Ascending aorta (tissue), 2 donors: ENCODE measurements at regions of chr10 and their contacts with region 1.

Region 1: DNA sequence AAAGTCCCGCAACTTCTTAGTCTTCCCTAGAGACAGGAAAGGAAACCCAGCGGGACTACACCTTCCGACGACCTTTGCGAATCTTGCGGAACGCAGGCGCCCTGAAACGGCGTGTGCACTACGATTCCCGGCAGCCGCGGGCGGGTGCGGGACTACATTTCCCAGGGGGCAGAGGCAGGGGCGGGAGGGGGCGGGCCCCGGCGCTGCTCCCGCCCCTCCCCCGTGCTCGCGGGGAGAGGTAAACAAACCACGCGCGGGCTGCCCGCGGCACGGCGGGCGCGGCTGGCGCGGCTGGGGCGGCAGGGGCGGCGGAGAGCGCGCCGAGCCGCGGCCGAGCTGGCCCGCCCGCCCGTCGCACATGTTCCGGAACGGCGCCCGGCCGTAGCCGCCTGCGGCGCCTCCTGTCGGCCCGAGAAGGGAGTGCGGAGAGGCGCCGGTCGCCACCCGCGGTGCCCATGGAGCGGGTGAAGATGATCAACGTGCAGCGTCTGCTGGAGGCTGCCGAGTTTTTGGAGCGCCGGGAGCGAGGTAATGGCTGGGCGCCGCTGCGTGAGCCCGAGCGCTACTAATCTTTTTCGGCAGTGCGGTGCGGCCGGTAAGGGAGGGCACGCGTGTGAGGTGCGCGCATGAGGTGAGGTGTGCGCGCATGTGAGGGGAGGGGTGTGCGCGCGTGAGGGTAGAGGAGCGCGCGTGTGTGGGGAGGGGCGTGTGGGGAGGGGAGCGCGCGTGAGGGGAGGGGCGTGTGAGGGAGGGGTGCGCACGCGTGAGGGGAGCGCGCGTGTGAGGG is 18.5 kb downstream of the MXI1 start:
- DNase-seq: peak; percentile 63 to 95
- H3K4me3 ChIP-seq: peak overlapping the region; percentile 84 to 94
- H3K27ac ChIP-seq: peak overlapping the region; percentile 87 to 98
- H3K4me1 ChIP-seq: peaks cover 0 to 22% of the 10 kb centered on the region in 2 donors
- H3K27me3 ChIP-seq: no peaks in the 10 kb centered on the region
- CTCF ChIP-seq: peak; percentile 76 to 93 (median 77)

Region 2: DNA sequence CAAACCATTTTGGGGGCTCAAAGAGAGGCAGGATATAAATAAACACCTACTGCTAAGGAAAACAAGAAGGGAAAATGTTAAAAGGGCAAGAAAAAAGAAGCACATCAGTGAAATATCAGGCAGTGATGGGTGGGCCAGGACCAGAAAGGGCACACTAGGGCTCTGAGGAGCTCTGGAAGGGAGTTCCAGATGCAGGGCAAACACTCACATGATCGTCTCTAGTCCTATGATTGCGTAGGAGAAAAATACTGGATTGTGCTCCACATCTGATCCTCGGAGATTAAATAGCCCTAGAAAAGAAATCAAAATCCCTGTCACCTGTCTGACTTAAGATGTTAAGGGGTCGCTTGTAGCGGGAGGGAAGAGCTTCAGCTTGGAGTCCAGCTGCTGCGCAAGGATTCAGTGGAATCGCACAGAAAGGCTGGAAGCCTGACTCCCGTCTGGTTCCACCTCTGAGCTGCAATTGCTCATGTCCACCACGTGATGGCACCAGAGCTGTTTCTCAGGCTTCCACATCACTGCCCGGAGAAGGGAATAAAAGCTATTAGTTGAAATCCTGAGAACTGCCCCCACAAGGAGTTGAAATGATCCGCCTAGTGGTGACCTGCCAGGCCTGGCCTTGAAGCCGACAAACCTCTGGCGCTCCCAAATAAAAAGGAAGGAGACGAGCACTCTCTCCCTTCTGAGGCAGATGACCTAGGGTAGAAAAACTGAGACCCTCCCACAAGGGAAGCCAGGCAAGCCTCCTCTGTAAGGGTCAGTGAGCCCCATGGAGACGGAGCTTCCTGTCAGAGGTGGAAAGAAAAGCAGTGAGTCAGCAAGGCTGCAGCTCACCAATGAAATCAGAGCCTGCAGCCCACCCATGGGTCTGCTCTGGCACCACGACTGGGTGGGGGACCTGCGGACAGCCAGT is 341.8 kb before region 1 on chr10:
- intact Hi-C with region 1: loop called (anchors 5 kb)
- DNase-seq: peak in 1 of 2 donors; percentile 84
- H3K4me3 ChIP-seq: peak overlapping the region in 1 of 2 donors; percentile 45
- H3K27ac ChIP-seq: peak overlapping the region; percentile 60 to 68
- H3K4me1 ChIP-seq: peaks cover 5 to 24% of the 10 kb centered on the region in 2 donors
- H3K27me3 ChIP-seq: no peaks in the 10 kb centered on the region
- CTCF ChIP-seq: peak; percentile 95 to 97 (median 95)

Region 3: GRCh38 chr10:110137142-110137545 is 88.8 kb before region 1 on chr10:
- intact Hi-C with region 1: loop called (anchors 2 kb)
- DNase-seq: no peak
- H3K4me3 ChIP-seq: no peak overlapping the region
- H3K27ac ChIP-seq: peak overlapping the region; percentile 38 to 53
- H3K4me1 ChIP-seq: peaks cover 0 to 15% of the 10 kb centered on the region in 2 donors
- H3K27me3 ChIP-seq: no peaks in the 10 kb centered on the region
- CTCF ChIP-seq: peak; percentile 72 to 86 (median 78)

Region 4: DNA sequence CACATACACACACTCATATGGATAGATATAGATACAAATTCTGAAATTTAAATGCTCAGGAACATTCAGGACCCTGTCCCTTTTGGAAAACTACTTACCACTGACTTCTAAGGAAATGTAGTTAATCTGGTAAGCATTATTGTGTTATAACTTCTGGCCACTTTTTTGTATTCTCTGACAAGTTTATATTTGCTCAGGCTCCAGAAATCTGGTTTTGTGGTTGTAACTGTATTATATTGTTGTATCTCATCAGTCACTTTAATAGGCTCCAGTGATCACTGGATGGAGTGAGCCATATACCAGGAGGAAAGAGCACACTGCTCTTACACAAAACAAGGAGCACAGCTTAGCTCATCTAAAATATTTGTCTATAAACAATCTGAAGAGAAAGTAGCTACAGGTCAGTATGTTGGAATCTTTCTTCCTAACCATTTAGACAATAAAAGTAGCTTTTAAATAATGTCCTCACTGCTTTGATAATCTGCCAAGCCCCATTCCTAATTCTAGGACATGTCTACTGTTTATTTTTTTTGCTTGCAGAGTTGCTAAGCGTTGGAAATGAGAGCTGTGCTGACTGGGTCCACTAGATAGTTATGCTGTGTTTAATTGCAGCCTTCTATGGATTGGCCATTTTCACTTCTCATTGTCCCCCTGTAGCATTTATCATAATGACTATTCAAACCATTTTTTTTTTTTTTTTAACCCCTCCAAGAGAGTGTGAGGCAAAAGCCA is 35.0 kb after region 1 on chr10:
- intact Hi-C with region 1: loop called (anchors 5 kb)
- DNase-seq: no peak
- H3K4me3 ChIP-seq: no peak overlapping the region
- H3K27ac ChIP-seq: peak overlapping the region; percentile 84 to 90
- H3K4me1 ChIP-seq: peaks cover 8 to 61% of the 10 kb centered on the region in 2 donors
- H3K27me3 ChIP-seq: no peaks in the 10 kb centered on the region
- CTCF ChIP-seq: no peak

Region 5: DNA sequence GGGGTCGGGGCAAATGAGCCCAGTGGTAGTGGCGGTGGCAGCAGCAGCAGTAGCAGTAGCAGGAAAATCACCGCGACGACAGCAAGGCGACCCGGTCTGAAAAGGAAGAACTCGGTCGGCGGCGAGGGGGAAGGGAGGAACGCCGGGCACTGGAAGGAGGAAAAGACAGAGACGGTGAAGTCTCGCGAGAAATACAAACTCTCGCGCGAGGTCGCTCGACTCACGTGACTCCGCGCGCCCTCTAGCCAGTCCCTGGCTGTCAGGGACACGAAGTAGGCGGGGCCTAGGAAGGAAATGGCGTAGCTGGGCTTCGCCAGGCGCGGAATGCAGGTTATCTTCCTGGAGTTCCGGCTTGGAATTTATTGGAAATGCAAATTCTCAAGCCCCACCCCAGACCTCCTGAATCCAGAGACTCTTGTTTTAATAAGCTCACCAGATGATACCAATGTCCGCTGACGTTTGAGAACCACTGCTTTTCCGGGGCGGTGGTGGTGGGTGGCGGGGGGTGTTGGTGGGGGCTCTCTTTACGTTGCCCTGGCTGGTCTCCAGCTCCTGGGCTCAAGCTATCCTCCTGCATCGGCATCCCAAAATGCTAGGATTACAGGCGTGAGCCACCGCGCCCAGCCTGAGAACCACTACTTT is 79.0 kb after region 1 on chr10 and contains the start of gene SMNDC1:
- intact Hi-C with region 1: loop called (anchors 2 kb)
- DNase-seq: peak; percentile 90 to 99
- H3K4me3 ChIP-seq: peak within 1 kb of the TSS; percentile 75 to 99
- H3K27ac ChIP-seq: peak within 1 kb of the TSS; percentile 95 to 96
- H3K4me1 ChIP-seq: peaks cover 5 to 36% of the 10 kb centered on the region in 2 donors
- H3K27me3 ChIP-seq: no peaks in the 10 kb centered on the region
- CTCF ChIP-seq: no peak
- total RNA-seq, gene SMNDC1: 6.9 TPM

Region 6: GRCh38 chr10:110567201-110568054 is 341.5 kb after region 1 on chr10 and contains the start of gene SMC3:
- intact Hi-C with region 1: loop called (anchors 1 kb)
- DNase-seq: peak; percentile 40 to 94
- H3K4me3 ChIP-seq: peak within 1 kb of the TSS; percentile 81 to 97
- H3K27ac ChIP-seq: peak within 1 kb of the TSS; percentile 84 to 85
- H3K4me1 ChIP-seq: peaks cover 0 to 10% of the 10 kb centered on the region in 2 donors
- H3K27me3 ChIP-seq: no peaks in the 10 kb centered on the region
- CTCF ChIP-seq: no peak
- total RNA-seq, gene SMC3: 14.8 TPM

Region 7: DNA sequence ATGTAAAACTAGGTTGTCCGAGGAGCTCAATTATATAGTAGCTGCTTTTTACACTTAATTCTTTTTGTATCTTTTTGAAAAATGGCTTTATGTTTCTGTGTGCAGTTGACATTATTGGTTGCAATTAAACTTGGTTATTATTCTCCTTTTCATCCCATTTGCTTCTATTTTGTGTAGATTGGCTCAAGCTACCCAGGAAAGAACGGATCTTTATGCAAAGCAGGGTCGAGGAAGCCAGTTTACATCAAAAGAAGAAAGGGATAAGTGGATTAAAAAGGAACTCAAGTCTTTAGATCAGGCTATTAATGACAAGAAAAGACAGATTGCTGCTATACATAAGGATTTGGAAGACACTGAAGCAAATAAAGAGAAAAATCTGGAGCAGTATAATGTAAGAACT is 358.1 kb after region 1 on chr10:
- intact Hi-C with region 1: no loop called
- DNase-seq: no peak
- H3K4me3 ChIP-seq: no peak overlapping the region
- H3K27ac ChIP-seq: no peak overlapping the region
- H3K4me1 ChIP-seq: no peaks in the 10 kb centered on the region
- H3K27me3 ChIP-seq: no peaks in the 10 kb centered on the region
- CTCF ChIP-seq: no peak